Activated CD8-positive, alpha-beta T cell treated with anti-CD3 and anti-CD28 coated beads for 36 hours (primary cell): ENCODE measurements at regions of chr12 and their contacts with region 1.

Region 1: GRCh38 chr12:53213348-53213747 is 6.3 kb upstream of the ITGB7 start:
- DNase-seq: peak; percentile 90
- ATAC-seq: peak; percentile 63
- H3K4me3 Mint-ChIP-seq: no peak overlapping the region
- H3K27ac Mint-ChIP-seq: no peak overlapping the region
- H3K4me1 Mint-ChIP-seq: peaks cover 68% of the 10 kb centered on the region
- H3K27me3 Mint-ChIP-seq: no peaks in the 10 kb centered on the region
- CTCF ChIP-seq: peak; percentile 97

Region 2: GRCh38 chr12:53098982-53099651 is 114.2 kb before region 1 on chr12:
- CTCF ChIA-PET with region 1: interaction called, 10 read pairs
- POLR2A ChIA-PET with region 1: interaction called, 3 read pairs
- intact Hi-C with region 1: no loop called
- DNase-seq: peak; percentile 97
- ATAC-seq: peak; percentile 52
- H3K4me3 Mint-ChIP-seq: peak overlapping the region; percentile 69
- H3K27ac Mint-ChIP-seq: peak overlapping the region; percentile 86
- H3K4me1 Mint-ChIP-seq: peaks cover 51% of the 10 kb centered on the region
- H3K27me3 Mint-ChIP-seq: peaks cover 2% of the 10 kb centered on the region
- CTCF ChIP-seq: peak; percentile 93

Region 3: DNA sequence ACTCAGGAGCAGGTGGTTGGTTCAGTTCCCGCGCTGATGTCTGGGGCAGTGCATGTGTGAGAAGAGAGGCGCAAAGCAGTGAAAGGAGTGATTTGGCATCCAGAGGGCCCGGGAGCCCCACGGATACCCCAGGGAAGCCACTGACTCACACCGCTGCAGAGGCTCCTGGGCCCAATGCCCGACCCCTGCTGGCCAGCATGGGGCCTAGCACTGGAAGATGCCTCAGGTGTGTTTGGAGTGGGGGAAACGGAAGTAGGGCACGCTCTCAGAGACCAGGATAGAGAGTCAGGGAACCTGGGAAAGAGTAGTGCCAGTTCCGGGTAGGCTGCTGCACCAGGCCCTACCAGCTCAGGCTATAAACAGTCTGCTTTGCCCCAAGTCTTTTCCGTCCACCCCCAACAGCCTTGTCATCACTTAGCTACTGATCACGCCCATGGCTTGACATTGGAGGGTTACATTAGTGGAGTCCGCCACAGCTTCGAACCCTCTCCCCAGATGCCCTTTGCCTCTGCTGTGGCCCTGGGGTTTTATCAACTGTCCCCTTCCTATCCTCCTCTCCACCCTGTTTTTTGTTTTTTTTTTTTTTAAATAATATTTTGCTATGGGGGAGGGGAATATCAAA is 23.1 kb before region 1 on chr12:
- CTCF ChIA-PET with region 1: interaction called, 12 read pairs
- POLR2A ChIA-PET with region 1: interaction called, 3 read pairs
- intact Hi-C with region 1: no loop called
- DNase-seq: peak; percentile 67
- ATAC-seq: peak; percentile 94
- H3K4me3 Mint-ChIP-seq: no peak overlapping the region
- H3K27ac Mint-ChIP-seq: peak overlapping the region; percentile 77
- H3K4me1 Mint-ChIP-seq: peaks cover 17% of the 10 kb centered on the region
- H3K27me3 Mint-ChIP-seq: no peaks in the 10 kb centered on the region
- CTCF ChIP-seq: peak; percentile 77

Region 4: GRCh38 chr12:53231826-53232645 is 18.7 kb after region 1 on chr12 and contains the start of gene RARG:
- CTCF ChIA-PET with region 1: interaction called, 23 read pairs
- POLR2A ChIA-PET with region 1: interaction called, 47 read pairs
- intact Hi-C with region 1: no loop called
- DNase-seq: peak; percentile 76
- ATAC-seq: peak; percentile 74
- H3K4me3 Mint-ChIP-seq: peak within 1 kb of the TSS; percentile 81
- H3K27ac Mint-ChIP-seq: peak within 1 kb of the TSS; percentile 87
- H3K4me1 Mint-ChIP-seq: peaks cover 75% of the 10 kb centered on the region
- H3K27me3 Mint-ChIP-seq: no peaks in the 10 kb centered on the region
- CTCF ChIP-seq: no peak
- total RNA-seq, gene RARG: 19.7 to 20.3 TPM

Region 5: GRCh38 chr12:53251477-53252348 is 38.4 kb after region 1 on chr12:
- CTCF ChIA-PET with region 1: interaction called, 100 read pairs
- POLR2A ChIA-PET with region 1: interaction called, 5 read pairs
- intact Hi-C with region 1: loop called (anchors 2 kb)
- DNase-seq: peak; percentile 81
- ATAC-seq: peak; percentile 90
- H3K4me3 Mint-ChIP-seq: peak overlapping the region; percentile 83
- H3K27ac Mint-ChIP-seq: peak overlapping the region; percentile 95
- H3K4me1 Mint-ChIP-seq: peaks cover 39% of the 10 kb centered on the region
- H3K27me3 Mint-ChIP-seq: no peaks in the 10 kb centered on the region
- CTCF ChIP-seq: peak; percentile 47

Region 6: DNA sequence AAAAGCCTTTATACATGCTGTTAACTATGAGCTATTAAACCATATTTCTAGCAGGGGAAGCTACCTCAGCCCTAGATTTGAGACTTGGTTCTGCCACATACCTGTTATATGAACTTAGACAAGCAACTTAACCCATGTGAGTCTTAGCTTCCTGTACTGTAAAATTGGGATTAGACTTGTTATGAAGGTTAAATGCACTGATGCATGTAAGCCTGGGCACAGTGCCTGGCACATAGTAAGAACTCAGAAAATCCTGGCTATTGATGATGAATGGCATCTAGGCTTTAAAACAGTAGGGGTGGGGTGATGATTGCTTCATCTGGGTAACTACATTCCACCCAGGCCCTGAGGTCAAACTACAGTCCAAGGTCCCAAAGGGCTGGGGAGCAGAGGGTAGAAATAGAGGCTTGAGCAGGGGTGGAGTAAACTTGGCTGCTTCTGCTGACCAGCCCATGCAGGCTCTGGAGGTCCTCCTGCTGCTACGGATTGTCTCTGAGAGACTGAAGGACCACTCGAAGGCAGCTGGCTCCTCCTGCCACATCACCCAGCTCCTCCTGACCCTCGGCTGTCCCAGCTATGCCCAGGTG is 66.0 kb after region 1 on chr12:
- CTCF ChIA-PET with region 1: interaction called, 130 read pairs
- POLR2A ChIA-PET with region 1: interaction called, 6 read pairs
- intact Hi-C with region 1: no loop called
- DNase-seq: no peak
- ATAC-seq: no peak
- H3K4me3 Mint-ChIP-seq: no peak overlapping the region
- H3K27ac Mint-ChIP-seq: no peak overlapping the region
- H3K4me1 Mint-ChIP-seq: peaks cover 2% of the 10 kb centered on the region
- H3K27me3 Mint-ChIP-seq: no peaks in the 10 kb centered on the region
- CTCF ChIP-seq: no peak

Region 7: DNA sequence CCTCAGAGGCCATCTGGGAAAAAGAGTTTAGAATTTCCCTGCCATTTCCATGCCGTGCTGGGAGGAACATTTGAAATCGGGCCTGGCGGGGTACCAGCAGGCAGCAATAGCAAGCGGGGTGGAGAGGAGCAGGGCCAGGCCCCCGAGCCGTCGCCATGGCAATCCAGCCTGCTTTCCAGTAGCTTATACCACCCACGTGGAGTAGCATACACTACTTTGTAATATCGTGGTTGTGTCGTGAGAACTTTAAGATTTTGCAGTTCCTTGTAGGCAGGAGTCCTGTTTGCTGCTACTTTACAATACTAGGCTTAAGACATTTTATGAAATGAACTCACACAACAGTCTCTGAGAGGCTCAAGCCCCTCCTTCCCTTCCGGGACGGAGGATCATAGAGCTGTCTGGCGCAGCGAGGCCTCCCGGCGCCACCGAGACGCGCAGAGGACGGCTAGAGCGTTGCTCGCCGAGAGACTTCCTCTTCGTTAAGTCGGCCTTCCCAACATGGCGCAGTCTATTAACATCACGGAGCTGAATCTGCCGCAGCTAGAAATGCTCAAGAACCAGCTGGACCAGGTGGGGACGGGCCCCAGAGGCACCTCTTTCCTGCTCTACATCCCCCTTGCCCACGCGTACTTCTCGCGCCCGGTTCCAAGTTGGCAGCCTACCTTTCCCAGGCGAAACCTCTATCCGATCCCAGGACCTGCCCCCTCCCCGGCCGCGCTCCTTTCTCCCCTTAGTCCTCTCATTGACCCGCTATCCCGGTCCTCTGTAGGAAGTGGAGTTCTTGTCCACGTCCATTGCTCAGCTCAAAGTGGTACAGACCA is 81.9 kb after region 1 on chr12 and contains the start of gene PFDN5:
- CTCF ChIA-PET with region 1: interaction called, 130 read pairs
- POLR2A ChIA-PET with region 1: interaction called, 3 read pairs
- intact Hi-C with region 1: loop called (anchors 2 kb)
- DNase-seq: peak; percentile 94
- ATAC-seq: peak; percentile 90
- H3K4me3 Mint-ChIP-seq: peak within 1 kb of the TSS; percentile 98
- H3K27ac Mint-ChIP-seq: peak within 1 kb of the TSS; percentile 91
- H3K4me1 Mint-ChIP-seq: peaks cover 43% of the 10 kb centered on the region
- H3K27me3 Mint-ChIP-seq: no peaks in the 10 kb centered on the region
- CTCF ChIP-seq: no peak
- total RNA-seq, gene PFDN5: 322 to 373 TPM